Activated naive CD4-positive, alpha-beta T cell treated with anti-CD3 and anti-CD28 coated beads, Interleukin-2, amount 10 ng/mL, durations not matched to agents 7 days and 5 days (primary cell): ENCODE measurements at regions of chr1 and their contacts with region 1.

Region 1: DNA sequence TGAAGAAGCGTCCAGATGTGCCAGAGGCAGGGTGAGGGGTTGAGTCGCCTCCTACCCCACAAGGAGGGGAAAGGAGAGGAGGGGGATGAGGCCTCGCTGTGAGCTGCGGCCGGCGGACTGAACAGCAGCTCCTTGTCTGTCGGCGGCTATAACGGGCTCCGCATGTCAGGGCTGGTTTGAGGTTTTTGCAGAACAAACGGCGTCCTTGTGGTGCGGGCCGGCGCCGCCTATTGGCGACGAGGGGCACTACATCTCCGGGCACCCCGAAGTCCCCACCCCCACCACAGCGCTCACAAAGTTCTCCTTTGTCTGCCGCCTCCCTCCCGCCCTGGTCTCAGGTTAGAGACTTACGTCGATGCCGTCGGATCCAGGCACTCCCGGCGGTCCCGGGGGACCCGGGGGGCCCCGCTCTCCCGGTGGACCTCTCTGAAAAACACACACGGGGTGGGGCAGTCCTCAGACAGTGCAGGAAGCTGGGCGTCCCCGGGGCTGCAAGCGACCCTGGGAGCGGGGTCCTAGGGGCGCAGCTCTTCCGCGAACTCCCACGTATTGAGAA is 1.8 kb downstream of the COL9A2 start:
- DNase-seq: peak; percentile 86
- H3K4me3 Mint-ChIP-seq: peak overlapping the region; percentile 61
- H3K27ac Mint-ChIP-seq: peak overlapping the region; percentile 28
- H3K4me1 Mint-ChIP-seq: peaks cover 54% of the 10 kb centered on the region
- H3K27me3 Mint-ChIP-seq: peaks cover 72% of the 10 kb centered on the region

Region 2: GRCh38 chr1:40143891-40144575 is 171.3 kb before region 1 on chr1:
- CTCF ChIA-PET with region 1: interaction called, 18 read pairs
- DNase-seq: peak; percentile 64
- H3K4me3 Mint-ChIP-seq: no peak overlapping the region
- H3K27ac Mint-ChIP-seq: no peak overlapping the region
- H3K4me1 Mint-ChIP-seq: peaks cover 12% of the 10 kb centered on the region
- H3K27me3 Mint-ChIP-seq: peaks cover 34% of the 10 kb centered on the region

Region 3: DNA sequence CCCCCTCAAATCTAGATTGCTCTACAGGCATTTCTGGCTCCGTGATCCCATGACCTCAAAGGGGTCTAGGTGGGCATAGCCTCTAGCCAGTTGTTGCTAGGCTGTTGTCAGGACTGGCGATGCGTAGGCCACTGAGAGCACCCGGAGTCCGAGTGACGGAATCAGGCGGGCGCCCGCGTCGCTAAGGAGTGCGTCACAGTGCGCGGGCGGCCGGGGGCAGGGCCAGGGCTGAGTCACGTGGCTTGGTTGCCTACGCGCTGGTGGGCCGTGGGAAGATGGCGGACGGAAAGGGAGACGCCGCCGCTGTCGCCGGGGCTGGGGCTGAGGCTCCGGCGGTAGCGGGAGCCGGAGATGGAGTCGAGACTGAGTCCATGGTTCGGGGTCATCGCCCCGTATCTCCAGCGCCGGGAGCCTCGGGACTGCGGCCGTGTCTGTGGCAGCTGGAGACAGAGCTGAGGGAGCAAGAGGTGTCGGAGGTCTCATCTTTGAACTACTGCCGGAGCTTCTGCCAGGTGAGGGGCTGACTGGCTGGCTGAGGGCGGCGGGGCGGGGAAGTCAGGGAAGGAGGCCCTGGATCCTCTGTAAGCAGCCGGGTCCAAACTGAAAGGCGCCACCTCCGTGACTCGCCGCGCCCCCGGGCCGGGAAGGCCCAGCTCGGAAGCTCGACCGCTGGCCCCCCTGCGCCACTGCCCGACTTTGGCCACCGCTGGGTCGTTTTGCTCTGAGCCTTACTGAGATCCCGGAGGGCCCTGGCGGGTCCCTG is 154.0 kb before region 1 on chr1 and contains the start of gene RLF:
- CTCF ChIA-PET with region 1: interaction called, 73 read pairs
- DNase-seq: peak; percentile 96
- H3K4me3 Mint-ChIP-seq: no peak within 1 kb of the TSS
- H3K27ac Mint-ChIP-seq: no peak within 1 kb of the TSS
- H3K4me1 Mint-ChIP-seq: peaks cover 5% of the 10 kb centered on the region
- H3K27me3 Mint-ChIP-seq: no peaks in the 10 kb centered on the region